OCI-LY7 (cell line): ENCODE measurements at regions of chr1 and their contacts with region 1.

Region 1: GRCh38 chr1:151098126-151098525 is 27.6 kb downstream of the GABPB2 start:
- DNase-seq: no peak
- H3K4me3 ChIP-seq: no peak overlapping the region
- H3K27ac ChIP-seq: no peak overlapping the region
- H3K4me1 ChIP-seq: no peaks in the 10 kb centered on the region
- CTCF ChIP-seq: no peak

Region 2: DNA sequence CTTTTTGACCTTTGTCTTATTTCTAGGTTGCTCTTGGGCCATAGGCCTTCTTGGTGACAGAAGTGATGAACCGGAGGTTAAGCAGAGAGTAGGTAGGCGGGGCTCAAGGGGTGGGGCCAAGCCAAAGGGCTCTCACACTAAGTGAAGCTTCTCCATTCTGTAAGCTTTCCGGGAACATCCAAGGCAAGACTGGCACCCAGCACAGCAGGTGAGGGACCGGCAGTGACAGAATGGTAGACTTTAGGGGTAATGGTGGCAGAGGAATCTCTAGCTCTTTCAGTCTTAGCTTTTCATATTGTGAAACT is 58.3 kb after region 1 on chr1 and contains the start of gene TNFAIP8L2:
- CTCF ChIA-PET with region 1: interaction called, 35 read pairs
- POLR2A ChIA-PET with region 1: interaction called, 14 read pairs
- intact Hi-C with region 1: loop called (anchors 1 kb)
- DNase-seq: peak; percentile 78
- H3K4me3 ChIP-seq: peak within 1 kb of the TSS; percentile 76
- H3K27ac ChIP-seq: peak within 1 kb of the TSS; percentile 57
- H3K4me1 ChIP-seq: peaks cover 38% of the 10 kb centered on the region
- CTCF ChIP-seq: no peak
- total RNA-seq, gene TNFAIP8L2: 7.7 and 12.5 TPM in 2 replicates

Region 3: DNA sequence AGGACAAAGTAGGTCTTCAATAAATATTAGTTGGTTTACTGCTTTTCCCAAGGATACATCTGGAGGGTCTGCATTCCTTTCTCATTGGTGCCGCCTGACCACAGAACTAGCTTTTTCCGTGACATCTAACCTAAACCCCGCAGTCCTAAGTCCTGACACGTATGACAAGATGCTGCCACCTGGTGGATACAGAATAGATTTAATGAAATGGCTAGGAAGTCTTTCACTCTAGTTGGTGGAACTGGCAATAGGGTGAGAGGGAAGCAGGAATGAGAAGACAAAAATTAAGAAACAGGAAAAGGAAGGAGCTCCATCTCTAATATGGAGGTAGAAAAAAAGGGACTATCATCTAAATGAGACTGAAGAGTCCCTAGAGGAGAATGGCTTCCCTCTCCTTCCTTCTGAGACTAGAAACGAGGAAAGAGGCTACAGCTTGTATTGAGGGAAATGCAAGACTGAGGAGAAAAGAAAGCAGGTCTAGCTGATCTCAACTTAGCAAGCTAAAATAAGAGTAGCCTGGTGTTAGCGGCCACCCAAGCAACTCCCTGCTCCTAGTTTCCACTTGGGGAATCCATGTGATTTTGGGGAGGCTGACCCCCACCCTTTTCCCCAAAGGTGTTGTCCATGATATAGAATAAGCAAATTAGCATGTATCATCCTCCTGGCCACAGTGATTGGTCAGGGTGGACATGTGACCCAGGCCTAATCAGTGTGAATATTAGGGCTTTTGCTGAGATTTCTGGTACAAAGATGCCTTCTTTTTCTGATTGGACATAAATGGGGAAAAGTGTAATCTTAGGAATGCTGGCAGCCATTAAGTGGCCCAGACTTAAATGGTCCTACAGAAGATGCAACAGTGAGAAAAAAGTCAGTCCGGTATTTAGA is 243.0 kb after region 1 on chr1:
- CTCF ChIA-PET with region 1: no interaction called
- POLR2A ChIA-PET with region 1: no interaction called
- intact Hi-C with region 1: loop called (anchors 5 kb)
- DNase-seq: peak; percentile 89
- H3K4me3 ChIP-seq: no peak overlapping the region
- H3K27ac ChIP-seq: peak overlapping the region; percentile 49
- H3K4me1 ChIP-seq: peaks cover 22% of the 10 kb centered on the region
- CTCF ChIP-seq: peak; percentile 95